PC-9 (cell line): ENCODE measurements at regions of chr5 and their contacts with region 1.

Region 1: GRCh38 chr5:135246923-135247795 is 151.9 kb downstream of the MACROH2A1 start:
- DNase-seq: peak; percentile 31 to 90
- H3K4me3 ChIP-seq: peak overlapping the region; percentile 47; the same call in 1 of the 2 replicates
- H3K27ac ChIP-seq: peak overlapping the region; percentile 88
- H3K4me1 ChIP-seq: peaks cover 37% of the 10 kb centered on the region
- H3K27me3 ChIP-seq: no peaks in the 10 kb centered on the region
- CTCF ChIP-seq: no peak

Region 2: DNA sequence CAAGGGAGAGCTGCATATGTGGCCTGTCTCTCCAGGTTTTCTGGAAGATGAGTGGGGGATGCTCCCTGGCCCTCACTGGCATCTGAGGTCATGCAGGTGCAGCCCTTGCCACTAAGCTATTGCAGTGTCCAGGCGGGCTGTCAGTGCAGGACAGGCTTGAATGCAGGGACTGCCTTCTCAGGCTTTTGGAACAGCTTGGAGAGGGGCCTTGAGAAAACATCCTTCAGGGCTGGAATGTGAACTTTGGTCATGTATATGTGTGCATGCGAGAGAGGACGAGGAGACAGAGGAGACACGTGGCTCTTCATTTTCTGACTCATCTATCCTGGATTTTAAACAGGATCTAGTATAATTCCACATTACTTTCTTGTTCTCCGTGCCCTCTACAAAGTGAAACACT is 61.6 kb after region 1 on chr5:
- CTCF ChIA-PET with region 1: no interaction called
- POLR2A ChIA-PET with region 1: no interaction called
- intact Hi-C with region 1: loop called (anchors 5 kb)
- DNase-seq: no peak
- H3K4me3 ChIP-seq: no peak overlapping the region
- H3K27ac ChIP-seq: no peak overlapping the region
- H3K4me1 ChIP-seq: peaks cover 8% of the 10 kb centered on the region; the same call in 1 of the 2 replicates
- H3K27me3 ChIP-seq: no peaks in the 10 kb centered on the region
- CTCF ChIP-seq: no peak

Region 3: DNA sequence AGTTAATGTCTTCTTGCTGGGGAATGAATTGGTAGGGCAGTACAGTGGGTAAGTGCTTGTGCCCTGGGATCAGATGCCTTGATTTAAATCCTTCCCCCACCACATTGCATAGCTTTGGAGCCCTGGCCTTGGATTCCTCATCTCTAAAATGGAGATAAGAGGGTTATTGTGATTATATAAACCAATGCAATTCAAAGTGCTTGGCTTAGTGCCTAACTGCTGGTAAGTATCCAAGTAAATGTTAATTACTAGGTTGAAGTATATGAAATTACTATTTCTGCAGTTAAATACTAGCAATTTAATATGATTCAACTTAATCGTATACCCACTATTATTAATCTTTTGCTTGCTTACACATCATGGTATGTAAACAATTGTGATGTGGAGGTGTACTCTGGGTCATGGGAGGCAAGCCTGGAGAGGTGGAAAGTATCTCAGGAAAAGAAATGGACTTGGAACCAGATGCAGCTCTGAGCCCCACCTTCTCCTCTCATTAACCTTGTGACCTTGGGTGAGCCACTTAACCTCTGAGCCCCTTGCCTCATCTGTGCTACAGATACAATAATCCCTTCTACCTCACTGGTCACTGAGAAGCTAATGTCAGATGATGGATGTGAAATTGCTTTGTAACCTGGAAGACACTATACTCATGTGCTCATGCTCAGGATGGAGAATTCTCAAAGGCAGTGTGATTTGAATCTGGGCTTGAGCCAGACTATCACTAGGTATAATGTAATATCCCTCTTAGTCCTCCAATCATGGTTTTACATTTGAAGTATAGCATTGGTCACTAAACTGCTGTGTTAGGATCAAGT is 264.8 kb after region 1 on chr5:
- CTCF ChIA-PET with region 1: no interaction called
- POLR2A ChIA-PET with region 1: no interaction called
- intact Hi-C with region 1: no loop called
- DNase-seq: no peak
- H3K4me3 ChIP-seq: no peak overlapping the region
- H3K27ac ChIP-seq: no peak overlapping the region
- H3K4me1 ChIP-seq: no peaks in the 10 kb centered on the region
- H3K27me3 ChIP-seq: peaks cover 44% of the 10 kb centered on the region
- CTCF ChIP-seq: no peak